ENCODE measurements at regions of chr15 and their contacts with region 1.

Region 1: DNA sequence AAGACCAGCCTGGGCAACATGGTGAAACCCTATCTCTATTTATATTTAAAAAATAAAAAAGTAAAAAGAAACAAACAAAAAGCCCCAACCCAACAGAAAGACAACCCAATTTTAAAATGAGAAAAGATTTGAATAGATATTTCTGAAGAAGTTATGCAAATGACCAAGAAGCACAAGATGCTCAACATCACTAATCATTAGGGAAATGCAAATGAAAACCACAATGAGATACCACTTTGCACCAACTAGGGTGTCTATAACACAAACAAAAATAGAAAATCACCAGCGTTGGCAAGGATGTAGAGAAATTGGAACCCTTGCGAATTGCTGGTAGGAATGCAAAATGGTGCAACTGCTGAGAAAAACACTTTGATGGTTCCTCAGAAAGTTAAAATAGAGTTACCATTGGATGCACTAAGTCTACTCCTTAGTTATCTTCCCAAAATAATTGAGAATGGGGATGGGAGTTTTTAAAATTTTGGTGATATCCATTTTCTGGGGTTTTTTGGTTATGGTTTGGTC is 45.8 kb upstream of the CCNB2 start:
- DNase-seq: no peak
- ATAC-seq: no peak
- H3K4me3 ChIP-seq: no peak overlapping the region
- H3K27ac ChIP-seq: no peak overlapping the region
- H3K4me1 ChIP-seq: no peaks in the 10 kb centered on the region
- H3K27me3 ChIP-seq: no peaks in the 10 kb centered on the region
- CTCF ChIP-seq: no peak
- EP300 ChIP-seq: no peak
- POLR2A ChIP-seq: no peak
- RAD21 ChIP-seq: no peak

Region 2: GRCh38 chr15:58987489-58988005 is 71.6 kb before region 1 on chr15 and contains the start of gene RNF111:
- CTCF ChIA-PET with region 1: no interaction called
- POLR2A ChIA-PET with region 1: no interaction called
- in situ Hi-C with region 1: no loop called
- intact Hi-C with region 1: loop called (anchors 5 kb)
- DNase-seq: peak; percentile 84 to 97 (median 88)
- ATAC-seq: peak; percentile 88
- H3K4me3 ChIP-seq: peak within 1 kb of the TSS; percentile 96
- H3K27ac ChIP-seq: peak within 1 kb of the TSS; percentile 97
- H3K4me1 ChIP-seq: peaks cover 3 to 7% of the 10 kb centered on the region in 2 experiments; a peak in 3 of 5 replicates
- H3K27me3 ChIP-seq: no peaks in the 10 kb centered on the region; a peak in 1 of 5 replicates
- CTCF ChIP-seq: no peak
- EP300 ChIP-seq: peak; percentile 12; the same call in 1 of the 2 replicates
- POLR2A ChIP-seq: peak; percentile 94
- RAD21 ChIP-seq: no peak
- polyA plus RNA-seq, gene RNF111: 7.9 to 8.5 TPM

Measured in K562 (cell line).